ENCODE measurements at regions of chr1 and their contacts with region 1.

Region 1: DNA sequence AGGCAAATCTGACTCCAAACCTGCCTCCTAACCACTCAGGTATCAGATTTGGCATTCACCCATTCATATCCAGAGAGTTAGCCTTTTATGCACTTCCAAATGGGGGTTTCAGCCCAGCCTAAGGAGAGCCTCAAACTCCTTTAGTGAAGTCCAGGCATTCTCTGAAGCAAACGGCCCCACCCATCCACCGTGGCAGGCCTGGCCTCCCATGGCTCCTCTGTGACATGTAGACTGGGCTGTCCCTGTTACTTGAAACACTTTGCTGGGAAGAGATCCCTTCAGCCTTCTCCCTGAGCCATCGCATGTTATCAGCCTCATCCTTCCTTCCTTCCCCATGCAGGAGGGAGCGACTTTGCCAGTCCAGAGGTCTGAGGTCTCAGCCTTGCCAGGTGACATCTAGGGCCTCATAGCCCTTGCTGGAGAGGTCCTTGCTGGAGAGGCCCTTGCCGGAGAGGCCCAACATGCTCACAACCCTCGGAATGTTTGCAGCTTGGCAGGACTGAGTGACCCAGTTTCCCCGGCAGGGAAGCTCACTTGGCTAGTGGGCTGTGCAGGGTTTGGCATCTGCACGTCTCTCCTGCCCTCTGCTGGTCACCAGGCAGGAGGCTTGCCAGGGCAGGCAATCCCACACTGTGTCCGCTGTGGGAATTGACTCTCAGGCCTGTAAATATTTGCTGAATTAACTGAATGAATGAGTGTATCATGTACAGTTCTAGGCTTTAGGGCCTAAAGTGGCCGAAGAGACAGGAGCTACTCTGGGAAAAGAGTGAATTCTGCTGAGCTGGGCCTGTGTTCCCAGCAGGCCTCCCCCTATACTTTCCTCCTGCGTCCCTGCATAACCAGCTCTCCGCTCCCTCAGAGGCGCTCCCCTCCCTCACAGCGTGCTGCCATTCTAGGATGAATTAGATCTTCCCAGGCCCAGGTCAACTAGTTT is 26.7 kb upstream of the RBM15 start:
- DNase-seq: peak; percentile 77
- H3K4me3 ChIP-seq: peak overlapping the region in 1 of 2 experiments; percentile 49; a peak in 1 of 4 replicates
- H3K27ac ChIP-seq: no peak overlapping the region
- H3K4me1 ChIP-seq: peaks cover 0 to 4% of the 10 kb centered on the region in 2 experiments; a peak in 1 of 4 replicates
- H3K27me3 ChIP-seq: no peaks in the 10 kb centered on the region; the same call in 1 of the 2 replicates
- CTCF ChIP-seq: peak; percentile 94
- EP300 ChIP-seq: no peak
- RAD21 ChIP-seq: peak; percentile 100

Region 2: DNA sequence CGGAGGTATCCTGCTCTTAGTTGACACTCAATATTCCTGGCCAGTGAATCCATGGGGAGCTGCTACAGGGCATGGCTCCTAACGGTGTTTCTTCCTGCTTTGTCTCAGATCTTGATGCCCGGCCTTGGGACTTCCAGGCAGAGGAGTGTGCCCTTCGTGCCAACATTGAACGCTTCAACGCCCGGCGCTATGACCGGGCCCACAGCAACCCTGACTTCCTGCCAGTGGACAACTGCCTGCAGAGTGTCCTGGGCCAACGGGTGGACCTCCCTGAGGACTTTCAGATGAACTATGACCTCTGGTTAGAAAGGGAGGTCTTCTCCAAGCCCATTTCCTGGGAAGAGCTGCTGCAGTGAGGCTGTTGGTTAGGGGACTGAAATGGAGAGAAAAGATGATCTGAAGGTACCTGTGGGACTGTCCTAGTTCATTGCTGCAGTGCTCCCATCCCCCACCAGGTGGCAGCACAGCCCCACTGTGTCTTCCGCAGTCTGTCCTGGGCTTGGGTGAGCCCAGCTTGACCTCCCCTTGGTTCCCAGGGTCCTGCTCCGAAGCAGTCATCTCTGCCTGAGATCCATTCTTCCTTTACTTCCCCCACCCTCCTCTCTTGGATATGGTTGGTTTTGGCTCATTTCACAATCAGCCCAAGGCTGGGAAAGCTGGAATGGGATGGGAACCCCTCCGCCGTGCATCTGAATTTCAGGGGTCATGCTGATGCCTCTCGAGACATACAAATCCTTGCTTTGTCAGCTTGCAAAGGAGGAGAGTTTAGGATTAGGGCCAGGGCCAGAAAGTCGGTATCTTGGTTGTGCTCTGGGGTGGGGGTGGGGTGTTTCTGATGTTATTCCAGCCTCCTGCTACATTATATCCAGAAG is 258.7 kb before region 1 on chr1:
- CTCF ChIA-PET with region 1: interaction called, 12 read pairs
- POLR2A ChIA-PET with region 1: no interaction called
- DNase-seq: peak; percentile 71
- H3K4me3 ChIP-seq: no peak overlapping the region; a peak in 1 of 4 replicates
- H3K27ac ChIP-seq: peak overlapping the region in 1 of 2 experiments; percentile 93; a peak in 2 of 4 replicates
- H3K4me1 ChIP-seq: peaks cover 60 to 79% of the 10 kb centered on the region in 2 experiments
- H3K27me3 ChIP-seq: no peaks in the 10 kb centered on the region
- CTCF ChIP-seq: peak; percentile 96
- EP300 ChIP-seq: no peak
- RAD21 ChIP-seq: peak; percentile 98

Region 3: GRCh38 chr1:110224240-110224995 is 88.0 kb before region 1 on chr1:
- CTCF ChIA-PET with region 1: interaction called, 12 read pairs
- POLR2A ChIA-PET with region 1: no interaction called
- DNase-seq: no peak
- H3K4me3 ChIP-seq: no peak overlapping the region
- H3K27ac ChIP-seq: no peak overlapping the region
- H3K4me1 ChIP-seq: peaks cover 0 to 8% of the 10 kb centered on the region in 2 experiments; a peak in 1 of 4 replicates
- H3K27me3 ChIP-seq: no peaks in the 10 kb centered on the region
- CTCF ChIP-seq: no peak
- EP300 ChIP-seq: no peak
- RAD21 ChIP-seq: no peak

Region 4: GRCh38 chr1:110254996-110255787 is 57.3 kb before region 1 on chr1:
- CTCF ChIA-PET with region 1: interaction called, 13 read pairs
- POLR2A ChIA-PET with region 1: no interaction called
- DNase-seq: no peak
- H3K4me3 ChIP-seq: no peak overlapping the region
- H3K27ac ChIP-seq: no peak overlapping the region
- H3K4me1 ChIP-seq: peaks cover 0 to 36% of the 10 kb centered on the region in 2 experiments; a peak in 1 of 4 replicates
- H3K27me3 ChIP-seq: peaks cover 4% of the 10 kb centered on the region; the same call in 1 of the 2 replicates
- CTCF ChIP-seq: no peak
- EP300 ChIP-seq: no peak
- RAD21 ChIP-seq: no peak

Region 5: DNA sequence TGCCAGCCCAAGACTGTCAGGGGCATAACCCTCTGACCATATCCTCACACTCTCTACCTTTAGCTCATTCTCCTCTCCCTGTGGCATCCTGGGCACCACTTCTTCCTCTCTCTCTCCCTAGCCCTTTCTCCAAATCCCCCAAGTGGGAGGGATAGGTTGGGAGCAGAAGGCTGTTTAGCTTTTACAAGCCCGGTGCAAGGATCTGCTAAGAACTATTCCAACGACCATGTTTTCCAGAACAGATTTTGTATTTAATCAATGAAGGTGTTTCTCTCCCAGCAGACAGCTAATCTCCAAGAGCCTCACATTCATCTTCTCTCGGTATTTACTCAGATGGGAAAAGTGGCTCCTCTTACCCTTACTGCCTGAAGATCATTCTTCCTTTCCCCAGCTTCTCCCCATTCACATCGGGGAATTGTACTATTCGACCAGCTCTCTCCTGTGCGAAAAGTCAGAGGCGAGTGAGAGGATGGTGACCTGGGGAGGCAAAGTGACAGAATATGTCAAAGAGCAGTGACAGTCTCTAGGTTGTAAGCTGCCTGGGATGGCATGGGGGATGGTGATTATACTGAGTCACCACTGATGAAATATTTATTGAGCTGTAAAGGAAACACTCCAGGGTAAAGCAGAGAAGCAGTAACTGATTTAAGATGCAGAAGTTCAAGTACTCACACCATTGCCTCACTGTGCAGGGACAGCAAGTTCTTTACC is 20.3 kb before region 1 on chr1:
- CTCF ChIA-PET with region 1: interaction called, 80 read pairs
- POLR2A ChIA-PET with region 1: no interaction called
- DNase-seq: no peak
- H3K4me3 ChIP-seq: no peak overlapping the region
- H3K27ac ChIP-seq: no peak overlapping the region
- H3K4me1 ChIP-seq: no peaks in the 10 kb centered on the region; a peak in 2 of 4 replicates
- H3K27me3 ChIP-seq: 0 out of 2 replicates have a peak, but pooled peaks cover 5% of the 10 kb centered on the region
- CTCF ChIP-seq: no peak
- EP300 ChIP-seq: no peak
- RAD21 ChIP-seq: no peak

Region 6: GRCh38 chr1:110328274-110328673 is 15.8 kb after region 1 on chr1:
- CTCF ChIA-PET with region 1: interaction called, 100 read pairs
- POLR2A ChIA-PET with region 1: no interaction called
- DNase-seq: no peak
- H3K4me3 ChIP-seq: no peak overlapping the region
- H3K27ac ChIP-seq: no peak overlapping the region
- H3K4me1 ChIP-seq: no peaks in the 10 kb centered on the region
- H3K27me3 ChIP-seq: no peaks in the 10 kb centered on the region
- CTCF ChIP-seq: no peak
- EP300 ChIP-seq: no peak
- RAD21 ChIP-seq: no peak

Region 7: DNA sequence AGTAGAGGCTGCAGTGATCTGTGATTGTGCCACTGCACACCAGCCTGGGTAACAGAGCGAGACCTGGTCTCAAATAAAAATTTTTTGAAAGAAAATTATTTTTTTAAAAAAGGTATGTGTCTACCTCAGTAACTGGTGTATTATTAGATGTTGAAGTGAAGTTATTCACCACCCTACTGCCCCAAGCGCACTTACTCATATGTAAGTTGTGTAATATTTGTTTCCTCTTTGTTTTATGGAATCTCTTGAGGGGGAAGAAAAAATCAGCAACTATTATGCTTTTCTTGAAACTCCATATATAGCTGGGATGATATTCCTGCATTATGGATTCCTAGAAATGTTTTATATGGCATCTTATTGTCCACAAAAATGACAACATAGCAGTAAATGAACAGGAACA is 48.0 kb after region 1 on chr1:
- CTCF ChIA-PET with region 1: interaction called, 13 read pairs
- POLR2A ChIA-PET with region 1: no interaction called
- DNase-seq: no peak
- H3K4me3 ChIP-seq: no peak overlapping the region
- H3K27ac ChIP-seq: no peak overlapping the region
- H3K4me1 ChIP-seq: no peaks in the 10 kb centered on the region; a peak in 2 of 4 replicates
- H3K27me3 ChIP-seq: no peaks in the 10 kb centered on the region
- CTCF ChIP-seq: no peak
- EP300 ChIP-seq: no peak
- RAD21 ChIP-seq: no peak

Region 8: GRCh38 chr1:110444561-110444960 is 132.1 kb after region 1 on chr1:
- CTCF ChIA-PET with region 1: no interaction called
- POLR2A ChIA-PET with region 1: no interaction called
- DNase-seq: no peak
- H3K4me3 ChIP-seq: no peak overlapping the region
- H3K27ac ChIP-seq: no peak overlapping the region
- H3K4me1 ChIP-seq: no peaks in the 10 kb centered on the region
- H3K27me3 ChIP-seq: peaks cover 30% of the 10 kb centered on the region
- CTCF ChIP-seq: no peak
- EP300 ChIP-seq: no peak
- RAD21 ChIP-seq: no peak

Measured in SK-N-SH (cell line).